ENCODE measurements at regions of chr17 and their contacts with region 1.

Region 1: DNA sequence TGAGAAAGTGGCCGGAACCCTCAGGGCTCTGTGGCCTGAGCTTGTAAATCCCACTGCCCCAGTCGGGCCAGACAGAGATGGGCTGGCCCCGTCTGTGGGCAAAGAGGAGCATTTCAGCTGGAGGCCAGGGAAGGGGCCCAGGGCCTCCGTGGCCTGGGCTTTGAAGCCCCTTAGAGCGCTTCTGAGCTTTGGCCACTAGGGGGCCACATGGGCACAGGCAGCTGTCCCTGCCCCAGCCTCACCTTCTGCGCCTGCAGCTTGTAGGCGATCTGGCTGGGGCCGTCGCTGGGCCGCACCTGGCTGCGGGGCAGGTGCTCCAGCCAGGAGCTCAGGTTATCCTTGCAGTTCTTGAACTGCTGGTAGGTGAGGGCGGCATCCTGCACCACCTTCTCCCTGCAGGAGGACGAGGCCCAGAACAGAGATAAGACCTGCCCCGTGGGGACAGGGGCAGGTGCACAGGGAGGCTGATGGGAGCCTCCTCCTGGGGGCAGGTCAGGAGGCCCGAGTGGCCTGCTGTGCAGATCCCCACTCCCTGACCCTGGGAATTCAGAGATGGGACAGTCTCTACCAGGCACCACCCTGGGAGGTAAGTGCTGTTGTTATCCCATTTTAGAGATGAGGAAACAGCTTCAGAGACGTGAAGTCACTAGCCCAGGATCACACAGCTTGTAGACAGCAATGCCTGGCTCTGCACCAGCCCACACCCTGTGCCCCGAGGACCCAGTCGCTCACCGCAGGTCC is 12.8 kb downstream of the EVPL start:
- DNase-seq: peak; percentile 80
- H3K4me3 ChIP-seq: no peak overlapping the region
- H3K27ac ChIP-seq: peak overlapping the region in 1 of 4 donors; percentile 10
- H3K4me1 ChIP-seq: peaks cover 0 to 7% (median 3%) of the 10 kb centered on the region in 4 donors
- H3K27me3 ChIP-seq: no peaks in the 10 kb centered on the region
- CTCF ChIP-seq: peak; percentile 94 to 99 (median 97)
- EP300 ChIP-seq: no peak
- POLR2A ChIP-seq: no peak

Region 2: DNA sequence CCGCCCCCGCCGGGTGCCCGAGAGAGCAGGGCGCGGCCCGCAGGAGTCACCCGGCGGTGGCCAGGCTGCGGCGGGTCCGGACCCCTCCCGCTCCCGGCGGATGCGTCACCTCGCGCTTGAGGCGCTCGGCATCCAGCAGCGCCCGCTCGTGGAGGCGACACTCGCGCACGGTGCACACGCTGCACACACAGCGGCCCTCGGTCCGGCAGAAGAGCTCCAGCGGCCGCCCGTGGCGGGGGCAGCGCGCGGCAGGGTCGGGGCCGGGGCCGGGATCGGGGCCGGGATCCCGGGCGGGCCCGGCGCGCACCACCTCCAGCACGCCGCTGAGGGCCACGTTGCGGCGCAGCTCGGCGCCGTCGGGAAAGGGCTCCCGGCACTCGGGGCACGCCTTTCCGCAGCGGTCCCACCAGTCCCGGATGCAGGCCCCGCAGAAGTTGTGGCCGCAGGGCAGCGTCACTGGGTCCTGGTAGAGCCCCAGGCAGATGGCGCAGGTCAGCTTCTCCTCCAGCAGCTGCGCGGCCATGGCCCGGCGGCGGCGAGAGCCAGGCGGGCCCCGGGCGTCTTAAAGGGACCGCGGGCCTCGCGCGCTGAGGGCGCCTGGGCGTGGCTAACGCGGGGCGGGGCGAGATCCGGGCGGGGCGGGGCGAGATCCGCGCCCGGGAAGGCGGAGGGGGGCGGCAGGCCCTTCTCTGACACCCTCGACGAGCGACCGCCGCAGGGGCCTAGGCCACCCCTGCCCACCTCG is 117.8 kb before region 1 on chr17 and contains the start of gene TRIM65:
- in situ Hi-C with region 1: no loop called
- intact Hi-C with region 1: no loop called
- DNase-seq: peak; percentile 88
- H3K4me3 ChIP-seq: peak within 1 kb of the TSS; percentile 70 to 96 (median 84)
- H3K27ac ChIP-seq: peak within 1 kb of the TSS; percentile 90 to 98 (median 97)
- H3K4me1 ChIP-seq: peaks cover 21 to 26% (median 24%) of the 10 kb centered on the region in 4 donors
- H3K27me3 ChIP-seq: no peaks in the 10 kb centered on the region
- CTCF ChIP-seq: peak in 3 of 5 experiments; percentile 5 to 33 (median 29)
- EP300 ChIP-seq: no peak
- POLR2A ChIP-seq: peak; percentile 76
- total RNA-seq, gene TRIM65: 16.8 to 21.7 (median 20.5) TPM

Region 3: DNA sequence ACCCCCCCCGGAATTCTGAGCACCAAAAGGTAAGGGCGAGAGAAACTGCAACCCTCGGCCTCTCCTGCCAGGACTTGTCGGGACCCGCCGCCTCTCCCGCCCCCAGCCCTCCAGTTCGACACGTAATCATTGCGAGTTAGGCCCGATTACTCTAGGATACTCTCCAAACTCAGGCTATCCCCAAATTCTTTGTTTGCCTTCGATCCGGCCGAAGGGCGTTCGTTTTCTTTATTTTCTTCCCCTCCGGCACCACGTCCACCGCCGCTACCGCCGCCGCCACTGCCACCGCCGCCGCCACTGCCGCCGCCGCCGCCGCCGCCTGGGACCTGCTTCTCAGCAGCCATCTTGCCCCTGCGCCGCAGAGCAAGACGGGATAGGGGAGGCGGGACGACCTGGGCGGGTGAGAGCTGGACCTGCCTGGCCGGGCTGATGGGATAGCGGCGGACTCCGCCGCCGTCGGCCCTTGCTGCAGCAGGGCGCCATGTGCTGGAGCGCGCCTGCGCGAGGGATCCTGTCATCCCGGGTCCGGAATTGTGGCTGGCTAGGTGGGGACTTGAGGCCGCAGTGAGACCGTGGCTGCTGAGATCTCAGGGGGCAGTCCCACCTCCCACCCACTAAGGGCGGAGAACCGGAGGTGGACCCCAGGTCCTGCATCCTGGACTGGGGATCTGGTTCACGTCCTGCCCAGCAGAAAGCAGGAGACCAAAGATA is 57.9 kb after region 1 on chr17 and contains the start of gene SRP68:
- in situ Hi-C with region 1: no loop called
- intact Hi-C with region 1: loop called (anchors 10 kb)
- DNase-seq: peak; percentile 93
- H3K4me3 ChIP-seq: peak within 1 kb of the TSS; percentile 74 to 88 (median 78)
- H3K27ac ChIP-seq: peak within 1 kb of the TSS; percentile 75 to 85 (median 82)
- H3K4me1 ChIP-seq: peaks cover 32 to 62% (median 45%) of the 10 kb centered on the region in 4 donors
- H3K27me3 ChIP-seq: peaks cover 39% of the 10 kb centered on the region
- CTCF ChIP-seq: no peak
- EP300 ChIP-seq: no peak
- POLR2A ChIP-seq: peak; percentile 77
- total RNA-seq, gene SRP68: 11.6 to 44.8 (median 30.4) TPM

Region 4: DNA sequence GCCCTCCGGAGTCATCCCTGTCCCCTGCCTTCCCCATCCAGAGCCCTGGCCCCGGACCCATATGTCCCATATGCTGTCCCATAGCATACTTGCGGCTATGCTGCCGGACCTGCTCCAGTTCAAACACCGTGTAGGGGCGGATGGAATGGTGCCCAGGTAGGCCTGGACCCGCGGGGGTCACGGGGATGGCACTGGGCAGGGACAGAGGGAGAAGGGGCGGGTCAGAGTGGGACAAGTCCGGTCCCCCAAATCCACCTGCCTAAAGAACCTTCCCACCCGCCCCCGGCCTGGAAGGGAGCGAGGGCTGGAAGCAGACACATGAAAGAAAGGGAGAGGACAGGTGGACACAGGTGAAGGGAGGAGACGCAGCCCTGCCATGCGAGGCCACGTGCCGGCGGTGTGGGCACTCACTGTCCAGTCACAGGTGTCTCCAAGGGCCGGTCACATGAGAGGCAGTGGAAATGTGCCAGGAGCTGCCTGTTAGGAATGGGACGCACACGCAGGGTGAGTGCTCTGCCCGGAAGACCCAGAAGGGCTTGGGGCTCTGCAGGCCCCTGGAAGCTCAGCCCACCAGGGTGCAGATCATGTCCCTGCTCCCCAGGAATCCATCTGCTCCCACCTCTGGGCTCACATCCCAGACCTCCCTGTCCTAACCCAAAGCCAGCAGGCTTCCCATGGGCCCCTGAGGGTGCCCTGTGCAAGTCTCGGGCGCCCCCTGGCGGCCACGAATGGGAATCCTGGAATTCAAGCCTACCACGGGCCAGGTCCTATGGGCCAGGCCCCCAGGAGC is 264.8 kb after region 1 on chr17:
- in situ Hi-C with region 1: loop called in 3 of 4 experiments (anchors 10 to 25 kb)
- intact Hi-C with region 1: no loop called
- DNase-seq: peak; percentile 91
- H3K4me3 ChIP-seq: no peak overlapping the region
- H3K27ac ChIP-seq: peak overlapping the region in 1 of 4 donors; percentile 1
- H3K4me1 ChIP-seq: peaks cover 0 to 7% (median 2%) of the 10 kb centered on the region in 4 donors
- H3K27me3 ChIP-seq: no peaks in the 10 kb centered on the region
- CTCF ChIP-seq: peak; percentile 95 to 98 (median 98)
- EP300 ChIP-seq: no peak
- POLR2A ChIP-seq: no peak

Region 5: DNA sequence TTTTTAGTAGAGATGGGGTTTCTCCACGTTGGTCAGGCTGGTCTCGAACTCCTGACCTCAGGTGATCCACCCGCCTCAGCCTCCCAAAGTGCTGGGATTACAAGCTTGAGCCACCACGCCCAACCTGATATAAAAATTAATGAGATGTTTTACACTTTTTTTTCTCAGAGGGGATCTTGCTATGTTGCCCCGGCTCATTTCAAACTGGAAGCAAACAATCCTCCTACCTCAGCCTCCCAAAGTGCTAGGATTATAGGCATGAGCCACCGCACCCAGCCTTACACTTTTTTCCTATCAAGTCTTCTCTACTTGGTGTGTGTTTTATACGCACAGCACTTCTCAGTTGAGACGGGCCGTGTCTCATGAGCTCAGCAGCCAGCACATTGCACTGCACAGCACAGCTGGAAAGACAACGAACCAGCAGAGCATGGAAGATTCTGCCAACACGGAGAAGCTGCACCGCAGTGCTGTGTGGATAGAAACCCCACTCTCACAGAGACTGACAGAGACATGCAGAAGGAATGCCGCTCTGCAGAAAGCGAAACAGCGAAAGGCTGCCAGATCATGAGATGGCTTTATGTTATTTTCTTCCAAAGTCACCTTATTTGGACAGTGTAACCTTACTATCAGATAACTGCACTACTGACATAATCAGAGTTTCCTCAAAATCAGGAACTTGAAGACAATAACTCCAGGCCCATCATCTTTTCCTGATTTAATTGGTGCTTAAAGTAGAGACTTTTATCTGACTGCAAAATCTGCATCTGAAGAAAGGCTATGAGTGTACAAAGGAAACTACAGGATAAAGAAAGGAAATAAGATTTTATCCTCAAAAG is 300.3 kb after region 1 on chr17:
- in situ Hi-C with region 1: no loop called
- intact Hi-C with region 1: no loop called
- DNase-seq: no peak
- H3K4me3 ChIP-seq: no peak overlapping the region
- H3K27ac ChIP-seq: no peak overlapping the region
- H3K4me1 ChIP-seq: no peaks in the 10 kb centered on the region
- H3K27me3 ChIP-seq: no peaks in the 10 kb centered on the region
- CTCF ChIP-seq: no peak
- EP300 ChIP-seq: no peak
- POLR2A ChIP-seq: no peak

Measured in transverse colon (tissue), 4 donors.